ENCODE measurements at regions of chr1 and their contacts with region 1.

Region 1: DNA sequence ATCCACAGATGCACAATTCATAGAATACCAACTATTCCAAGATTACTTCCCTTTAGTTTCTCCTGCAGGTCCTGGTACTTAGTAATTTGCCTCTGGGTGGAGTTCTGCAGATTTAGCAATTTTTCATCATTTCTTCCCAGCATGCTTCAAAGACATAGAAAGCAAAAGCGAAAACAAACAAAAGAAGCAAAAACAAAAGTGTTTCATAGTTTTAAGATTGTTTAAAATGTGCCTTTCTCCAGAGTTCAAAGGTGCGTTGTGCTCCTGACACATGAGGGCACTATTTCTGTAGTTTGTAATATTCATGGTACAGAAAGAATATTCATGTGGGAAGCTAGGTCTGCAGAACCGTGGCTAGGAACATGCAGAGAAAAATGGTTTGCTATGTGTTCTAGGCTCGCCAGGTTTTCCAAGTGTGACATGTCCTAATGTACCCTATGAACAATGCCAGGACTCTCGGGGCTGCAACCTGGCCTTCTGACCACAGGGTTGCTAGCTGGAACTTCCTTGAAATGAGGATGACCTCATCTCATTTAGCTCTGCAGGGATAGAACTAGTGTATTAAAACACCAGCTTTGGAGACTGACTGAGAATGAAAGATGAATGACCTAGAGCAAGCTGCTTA is 30.0 kb upstream of the RCSD1 start:
- DNase-seq: peak in 8 of 9 donors; percentile 35 to 76 (median 60)
- ATAC-seq: peak; percentile 80
- H3K4me3 ChIP-seq: no peak overlapping the region
- H3K4me3 Mint-ChIP-seq: peak overlapping the region; percentile 9 to 80 (median 62)
- H3K27ac ChIP-seq: no peak overlapping the region
- H3K27ac Mint-ChIP-seq: peak overlapping the region in 8 of 9 donors; percentile 8 to 79 (median 36)
- H3K4me1 ChIP-seq: peaks cover 28 to 36% of the 10 kb centered on the region in 2 donors
- H3K4me1 Mint-ChIP-seq: peaks cover 27 to 50% (median 46%) of the 10 kb centered on the region in 7 donors
- H3K27me3 ChIP-seq: no peaks in the 10 kb centered on the region
- H3K27me3 Mint-ChIP-seq: peaks cover 0 to 3% (median 0%) of the 10 kb centered on the region in 5 donors

Region 2: DNA sequence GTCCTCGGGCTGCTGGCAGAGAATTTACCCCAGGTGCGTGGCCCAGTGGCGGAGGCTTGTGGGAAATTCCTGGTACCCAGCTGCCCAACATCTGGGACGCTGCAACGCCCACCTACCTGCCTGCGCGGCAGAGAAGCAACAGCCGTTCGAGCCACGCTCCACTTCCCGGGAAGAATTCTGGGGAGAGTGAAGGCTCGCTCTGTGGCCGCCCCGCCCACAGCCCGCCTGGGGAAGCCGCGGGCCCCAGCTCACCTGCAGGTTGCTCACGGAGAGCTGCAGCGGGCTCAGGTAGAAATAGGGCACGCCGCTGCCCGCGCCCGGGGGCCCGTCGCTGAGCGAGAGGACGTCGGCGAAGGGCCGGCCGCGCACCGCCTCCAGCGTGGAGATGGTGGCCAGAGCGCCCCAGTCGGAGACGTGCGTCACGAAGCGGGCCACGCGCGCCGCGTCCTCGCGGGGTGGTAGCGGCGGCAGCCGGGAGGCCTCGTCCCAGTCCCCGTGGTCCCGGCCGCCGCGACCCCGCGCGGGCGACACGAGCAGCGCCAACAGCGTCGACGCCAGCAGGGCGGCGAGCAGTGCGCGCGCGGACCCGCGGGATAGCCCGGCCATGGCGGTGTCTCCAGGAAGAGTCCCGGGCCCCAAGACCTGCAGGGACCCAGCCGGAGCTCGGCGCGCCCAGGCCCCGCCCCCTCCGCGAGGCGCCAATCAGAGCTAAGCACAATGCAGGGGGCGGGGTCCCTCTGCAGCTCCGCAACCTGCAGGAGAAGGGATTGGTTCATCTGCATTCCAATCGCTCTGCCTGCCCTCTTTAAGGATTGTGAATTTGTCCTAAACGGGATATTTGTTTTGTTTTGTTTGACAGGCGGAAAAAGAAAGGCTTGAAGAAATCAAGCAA is 46.7 kb before region 1 on chr1 and contains the start of gene CREG1:
- CTCF ChIA-PET with region 1: interaction called, 15 read pairs
- POLR2A ChIA-PET with region 1: interaction called, 3 read pairs
- intact Hi-C with region 1: loop called in 1 of 2 experiments (anchors 2 kb)
- DNase-seq: peak; percentile 82 to 92 (median 88)
- ATAC-seq: peak; percentile 98
- H3K4me3 ChIP-seq: peak within 1 kb of the TSS; percentile 71
- H3K4me3 Mint-ChIP-seq: peak within 1 kb of the TSS; percentile 85 to 97 (median 92)
- H3K27ac ChIP-seq: peak within 1 kb of the TSS; percentile 72
- H3K27ac Mint-ChIP-seq: peak within 1 kb of the TSS; percentile 43 to 88 (median 80)
- H3K4me1 ChIP-seq: peaks cover 19% of the 10 kb centered on the region in 2 donors
- H3K4me1 Mint-ChIP-seq: peaks cover 35 to 58% (median 46%) of the 10 kb centered on the region in 7 donors
- H3K27me3 ChIP-seq: no peaks in the 10 kb centered on the region
- H3K27me3 Mint-ChIP-seq: peaks cover 0 to 4% (median 0%) of the 10 kb centered on the region in 5 donors
- total RNA-seq, gene CREG1: 10.6 to 33.4 (median 23.1) TPM

Region 3: GRCh38 chr1:167627865-167628641 is 28.0 kb after region 1 on chr1:
- CTCF ChIA-PET with region 1: interaction called, 283 read pairs
- POLR2A ChIA-PET with region 1: interaction called, 276 read pairs
- intact Hi-C with region 1: loop called in 1 of 2 experiments (anchors 1 kb)
- DNase-seq: peak; percentile 33 to 84 (median 73)
- ATAC-seq: peak; percentile 84
- H3K4me3 ChIP-seq: peak overlapping the region; percentile 48
- H3K4me3 Mint-ChIP-seq: peak overlapping the region; percentile 82 to 99 (median 92)
- H3K27ac ChIP-seq: peak overlapping the region; percentile 94
- H3K27ac Mint-ChIP-seq: peak overlapping the region; percentile 85 to 98 (median 95)
- H3K4me1 ChIP-seq: peaks cover 44 to 46% of the 10 kb centered on the region in 2 donors
- H3K4me1 Mint-ChIP-seq: peaks cover 48 to 69% (median 63%) of the 10 kb centered on the region in 7 donors
- H3K27me3 ChIP-seq: no peaks in the 10 kb centered on the region
- H3K27me3 Mint-ChIP-seq: no peaks in the 10 kb centered on the region

Region 4: DNA sequence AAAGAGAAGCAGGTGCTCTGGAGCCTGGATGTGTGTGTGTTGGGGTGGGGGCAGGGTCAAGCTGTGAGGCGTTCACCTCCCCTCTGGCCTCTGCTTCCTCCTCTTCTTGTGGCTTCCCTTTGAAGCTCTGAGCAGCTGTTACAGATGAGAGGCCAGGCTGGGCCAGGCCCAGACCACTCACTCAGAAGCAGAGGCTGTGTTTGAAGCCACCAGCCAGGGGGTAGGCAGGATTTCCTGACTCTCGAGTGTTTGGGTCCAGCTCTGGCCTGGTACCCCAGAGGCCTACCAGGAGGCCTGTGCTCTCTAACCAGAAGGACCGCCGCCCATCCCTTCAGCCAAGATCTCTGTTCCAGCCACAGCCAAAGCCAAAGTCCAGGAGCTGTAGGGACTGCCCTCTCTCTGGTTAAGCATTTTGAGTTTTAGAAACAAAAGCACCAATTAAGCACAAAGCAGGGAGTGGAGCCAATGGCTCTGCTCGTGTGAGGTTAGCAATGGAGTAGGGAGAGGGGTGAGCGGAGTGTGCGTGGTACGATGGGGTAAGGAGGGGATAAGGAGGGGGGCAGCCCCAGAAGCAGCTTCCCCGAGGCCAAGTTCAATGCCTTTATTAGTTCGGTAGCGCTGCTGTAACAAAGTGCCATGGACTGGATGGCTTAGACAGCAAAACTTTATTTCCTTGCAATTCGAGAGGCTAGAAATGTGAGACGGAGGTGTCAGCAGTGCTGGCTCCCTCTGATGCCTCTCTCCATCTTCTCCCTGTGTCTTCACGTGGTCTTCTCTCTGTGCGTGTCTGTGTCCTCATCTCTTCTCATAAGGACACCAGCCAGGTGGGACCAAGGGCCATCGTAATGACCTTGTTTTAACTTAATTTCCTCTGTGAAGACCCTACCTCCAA is 50.4 kb after region 1 on chr1:
- CTCF ChIA-PET with region 1: interaction called, 4 read pairs
- POLR2A ChIA-PET with region 1: interaction called, 3 read pairs
- intact Hi-C with region 1: loop called in 1 of 2 experiments (anchors 5 kb)
- DNase-seq: no peak
- ATAC-seq: peak; percentile 67
- H3K4me3 ChIP-seq: no peak overlapping the region
- H3K4me3 Mint-ChIP-seq: peak overlapping the region; percentile 12 to 86 (median 66)
- H3K27ac ChIP-seq: peak overlapping the region; percentile 59
- H3K27ac Mint-ChIP-seq: peak overlapping the region; percentile 75 to 94 (median 90)
- H3K4me1 ChIP-seq: peaks cover 75 to 77% of the 10 kb centered on the region in 2 donors
- H3K4me1 Mint-ChIP-seq: peaks cover 70 to 96% (median 87%) of the 10 kb centered on the region in 7 donors
- H3K27me3 ChIP-seq: no peaks in the 10 kb centered on the region
- H3K27me3 Mint-ChIP-seq: no peaks in the 10 kb centered on the region

Region 5: GRCh38 chr1:167687919-167688519 is 88.0 kb after region 1 on chr1:
- CTCF ChIA-PET with region 1: interaction called, 100 read pairs
- POLR2A ChIA-PET with region 1: interaction called, 26 read pairs
- intact Hi-C with region 1: loop called (anchors 1 kb)
- DNase-seq: peak; percentile 47 to 81 (median 71)
- ATAC-seq: peak; percentile 84
- H3K4me3 ChIP-seq: no peak overlapping the region
- H3K4me3 Mint-ChIP-seq: no peak overlapping the region
- H3K27ac ChIP-seq: no peak overlapping the region
- H3K27ac Mint-ChIP-seq: peak overlapping the region in 7 of 9 donors; percentile 19 to 82 (median 60)
- H3K4me1 ChIP-seq: no peaks in the 10 kb centered on the region
- H3K4me1 Mint-ChIP-seq: peaks cover 10 to 29% (median 25%) of the 10 kb centered on the region in 7 donors
- H3K27me3 ChIP-seq: no peaks in the 10 kb centered on the region
- H3K27me3 Mint-ChIP-seq: no peaks in the 10 kb centered on the region

Region 6: DNA sequence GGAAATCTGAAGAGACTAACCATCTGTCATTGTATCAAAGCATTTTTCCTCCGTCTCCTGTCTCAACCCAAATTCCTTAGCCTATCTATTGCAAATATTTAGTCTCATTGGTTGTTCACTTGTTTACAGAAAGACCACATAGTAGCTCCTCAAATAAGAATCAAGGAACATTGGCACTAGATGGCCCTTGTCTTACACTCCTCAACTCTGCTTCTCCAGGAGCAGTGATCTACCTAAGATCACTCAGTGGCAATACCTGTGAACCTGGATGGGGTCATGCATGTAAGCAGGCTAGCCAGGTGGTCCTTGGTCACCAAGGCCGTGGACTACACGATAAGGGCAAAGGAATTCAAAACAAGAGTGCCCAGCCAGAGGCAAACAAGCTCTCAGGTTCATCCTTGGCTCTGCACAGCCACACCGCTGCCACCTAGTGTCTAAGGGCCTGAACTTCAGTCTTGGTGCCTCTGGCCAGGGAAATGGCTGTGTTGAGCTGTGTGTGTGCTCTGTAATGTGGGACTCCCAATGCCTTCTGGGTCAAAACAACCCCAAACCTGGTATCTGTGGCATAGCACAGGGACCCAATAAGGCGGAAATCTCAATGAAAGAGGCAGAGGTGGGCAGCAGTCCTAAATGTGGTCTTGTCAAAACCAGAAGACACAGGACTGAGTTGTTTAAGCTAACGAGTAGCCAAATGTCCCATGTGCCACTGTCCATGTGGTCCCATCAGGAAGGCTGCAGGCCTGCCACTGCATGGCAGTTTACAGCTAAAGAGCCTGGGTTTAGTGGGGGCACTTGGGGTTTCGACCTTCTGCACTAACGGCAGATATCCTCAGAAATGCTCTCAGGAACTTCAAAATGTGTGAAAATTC is 482.2 kb after region 1 on chr1:
- CTCF ChIA-PET with region 1: interaction called, 3 read pairs
- POLR2A ChIA-PET with region 1: no interaction called
- intact Hi-C with region 1: loop called in 1 of 2 experiments (anchors 10 kb)
- DNase-seq: peak in 8 of 9 donors; percentile 29 to 66 (median 48)
- ATAC-seq: peak; percentile 83
- H3K4me3 ChIP-seq: no peak overlapping the region
- H3K4me3 Mint-ChIP-seq: no peak overlapping the region
- H3K27ac ChIP-seq: no peak overlapping the region
- H3K27ac Mint-ChIP-seq: peak overlapping the region in 1 of 9 donors; percentile 54
- H3K4me1 ChIP-seq: no peaks in the 10 kb centered on the region
- H3K4me1 Mint-ChIP-seq: peaks cover 0 to 12% (median 0%) of the 10 kb centered on the region in 7 donors
- H3K27me3 ChIP-seq: no peaks in the 10 kb centered on the region
- H3K27me3 Mint-ChIP-seq: no peaks in the 10 kb centered on the region